ENCODE measurements at regions of chr15 and their contacts with region 1.

Region 1: GRCh38 chr15:67091071-67091979 is 25.9 kb downstream of the SMAD3 start:
- DNase-seq: peak; percentile 73
- CTCF ChIP-seq: no peak

Region 2: GRCh38 chr15:67080900-67081431 is 10.4 kb before region 1 on chr15:
- CTCF ChIA-PET with region 1: interaction called, 23 read pairs
- POLR2A ChIA-PET with region 1: interaction called, 5 read pairs
- DNase-seq: peak; percentile 80
- CTCF ChIP-seq: peak; percentile 38

Region 3: GRCh38 chr15:67101911-67102598 is 10.7 kb after region 1 on chr15:
- CTCF ChIA-PET with region 1: interaction called, 22 read pairs
- POLR2A ChIA-PET with region 1: interaction called, 6 read pairs
- DNase-seq: peak; percentile 65
- CTCF ChIP-seq: no peak

Region 4: GRCh38 chr15:67109141-67110034 is 18.1 kb after region 1 on chr15:
- CTCF ChIA-PET with region 1: interaction called, 12 read pairs
- POLR2A ChIA-PET with region 1: no interaction called
- DNase-seq: peak; percentile 69
- CTCF ChIP-seq: no peak

Region 5: DNA sequence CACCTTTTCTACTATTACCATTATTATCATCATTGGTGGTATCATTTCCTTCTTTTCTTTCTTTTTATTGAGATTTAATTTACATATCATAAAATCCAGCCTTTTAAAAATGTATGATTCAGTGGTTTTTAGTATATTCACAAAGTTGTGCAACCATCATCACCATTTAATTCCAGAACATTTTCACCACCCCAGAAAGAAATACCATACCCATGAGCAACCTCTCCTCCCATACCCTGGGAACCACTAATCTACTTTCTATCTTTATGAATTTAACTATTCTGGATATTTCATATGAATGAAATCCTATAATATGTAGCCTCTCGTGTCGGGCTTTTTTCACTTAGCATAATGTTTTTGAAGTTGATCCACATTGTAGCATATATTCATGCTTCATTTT is 134.0 kb after region 1 on chr15:
- CTCF ChIA-PET with region 1: no interaction called
- POLR2A ChIA-PET with region 1: no interaction called
- DNase-seq: no peak
- CTCF ChIP-seq: no peak

Measured in GM10248 (cell line).